HepG2 (cell line): ENCODE measurements at regions of chr18 and their contacts with region 1.

Region 1: GRCh38 chr18:57881818-57882413 is 78.8 kb upstream of the ATP8B1 start:
- DNase-seq: peak; percentile 75
- ATAC-seq: peak; percentile 98
- H3K4me3 ChIP-seq: peak overlapping the region; percentile 48 to 67 (median 51); a peak in 5 of 6 replicates
- H3K27ac ChIP-seq: no peak overlapping the region
- H3K4me1 ChIP-seq: peaks cover 22% of the 10 kb centered on the region
- H3K27me3 ChIP-seq: 0 out of 5 replicates have a peak, but pooled peaks cover 0 to 4% of the 10 kb centered on the region in 2 experiments
- CTCF ChIP-seq: peak; percentile 98
- EP300 ChIP-seq: no peak
- POLR2A ChIP-seq: no peak
- RAD21 ChIP-seq: peak; percentile 92

Region 2: GRCh38 chr18:57984490-57985115 is 102.7 kb after region 1 on chr18:
- CTCF ChIA-PET with region 1: no interaction called
- POLR2A ChIA-PET with region 1: no interaction called
- in situ Hi-C with region 1: no loop called
- intact Hi-C with region 1: no loop called
- DNase-seq: no peak
- ATAC-seq: no peak
- H3K4me3 ChIP-seq: no peak overlapping the region
- H3K27ac ChIP-seq: no peak overlapping the region
- H3K4me1 ChIP-seq: peaks cover 40% of the 10 kb centered on the region
- H3K27me3 ChIP-seq: no peaks in the 10 kb centered on the region
- CTCF ChIP-seq: no peak
- EP300 ChIP-seq: no peak
- POLR2A ChIP-seq: no peak
- RAD21 ChIP-seq: no peak

Region 3: DNA sequence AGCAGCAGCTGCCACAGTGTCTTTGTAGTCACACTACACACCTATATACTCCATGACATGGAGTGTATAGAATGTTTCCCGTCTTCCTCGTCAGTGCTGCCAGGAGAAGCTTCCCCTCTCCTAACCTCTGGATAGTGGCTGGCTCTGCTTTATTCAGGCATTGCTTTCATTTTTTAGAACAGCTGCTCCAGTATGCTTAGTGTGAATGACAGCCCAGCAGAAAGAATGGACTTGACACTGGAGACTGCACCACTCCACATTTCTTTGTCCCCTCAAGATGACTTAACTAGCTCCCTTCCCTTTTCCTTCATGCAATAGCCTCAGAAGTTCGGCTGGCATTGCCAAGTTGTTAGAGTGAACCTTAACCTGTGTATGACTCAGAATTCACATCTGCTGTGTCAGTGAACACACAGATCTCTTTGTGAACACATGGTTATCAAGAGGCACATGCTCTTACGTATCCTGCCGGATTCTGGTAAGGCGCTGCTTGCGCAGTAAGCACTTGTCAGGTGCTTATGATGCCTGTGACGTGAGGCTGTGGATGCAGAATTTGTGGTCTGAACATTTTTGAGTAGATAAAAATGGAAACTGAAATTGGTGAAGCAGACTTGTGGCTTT is 236.0 kb after region 1 on chr18:
- CTCF ChIA-PET with region 1: interaction called, 9 read pairs
- POLR2A ChIA-PET with region 1: no interaction called
- in situ Hi-C with region 1: loop called (anchors 25 kb)
- intact Hi-C with region 1: no loop called
- DNase-seq: peak; percentile 69
- ATAC-seq: peak; percentile 71
- H3K4me3 ChIP-seq: no peak overlapping the region; a peak in 1 of 6 replicates
- H3K27ac ChIP-seq: peak overlapping the region; percentile 26
- H3K4me1 ChIP-seq: peaks cover 27% of the 10 kb centered on the region
- H3K27me3 ChIP-seq: no peaks in the 10 kb centered on the region
- CTCF ChIP-seq: no peak
- EP300 ChIP-seq: no peak
- POLR2A ChIP-seq: no peak
- RAD21 ChIP-seq: no peak

Region 4: GRCh38 chr18:58180738-58181353 is 298.9 kb after region 1 on chr18:
- CTCF ChIA-PET with region 1: interaction called, 4 read pairs
- POLR2A ChIA-PET with region 1: no interaction called
- in situ Hi-C with region 1: no loop called
- intact Hi-C with region 1: loop called (anchors 1 kb)
- DNase-seq: peak; percentile 37
- ATAC-seq: no peak; the same call in 2 of the 3 replicates
- H3K4me3 ChIP-seq: no peak overlapping the region
- H3K27ac ChIP-seq: no peak overlapping the region
- H3K4me1 ChIP-seq: peaks cover 25% of the 10 kb centered on the region
- H3K27me3 ChIP-seq: no peaks in the 10 kb centered on the region
- CTCF ChIP-seq: peak; percentile 68
- EP300 ChIP-seq: no peak
- POLR2A ChIP-seq: no peak
- RAD21 ChIP-seq: no peak

Region 5: GRCh38 chr18:58402247-58402646 is 520.3 kb after region 1 on chr18:
- CTCF ChIA-PET with region 1: no interaction called
- POLR2A ChIA-PET with region 1: no interaction called
- in situ Hi-C with region 1: no loop called
- intact Hi-C with region 1: loop called (anchors 2 kb)
- DNase-seq: peak; percentile 58
- ATAC-seq: no peak
- H3K4me3 ChIP-seq: no peak overlapping the region
- H3K27ac ChIP-seq: peak overlapping the region; percentile 98
- H3K4me1 ChIP-seq: peaks cover 100% of the 10 kb centered on the region
- H3K27me3 ChIP-seq: no peaks in the 10 kb centered on the region
- CTCF ChIP-seq: no peak
- EP300 ChIP-seq: no peak
- POLR2A ChIP-seq: no peak
- RAD21 ChIP-seq: no peak

Region 6: DNA sequence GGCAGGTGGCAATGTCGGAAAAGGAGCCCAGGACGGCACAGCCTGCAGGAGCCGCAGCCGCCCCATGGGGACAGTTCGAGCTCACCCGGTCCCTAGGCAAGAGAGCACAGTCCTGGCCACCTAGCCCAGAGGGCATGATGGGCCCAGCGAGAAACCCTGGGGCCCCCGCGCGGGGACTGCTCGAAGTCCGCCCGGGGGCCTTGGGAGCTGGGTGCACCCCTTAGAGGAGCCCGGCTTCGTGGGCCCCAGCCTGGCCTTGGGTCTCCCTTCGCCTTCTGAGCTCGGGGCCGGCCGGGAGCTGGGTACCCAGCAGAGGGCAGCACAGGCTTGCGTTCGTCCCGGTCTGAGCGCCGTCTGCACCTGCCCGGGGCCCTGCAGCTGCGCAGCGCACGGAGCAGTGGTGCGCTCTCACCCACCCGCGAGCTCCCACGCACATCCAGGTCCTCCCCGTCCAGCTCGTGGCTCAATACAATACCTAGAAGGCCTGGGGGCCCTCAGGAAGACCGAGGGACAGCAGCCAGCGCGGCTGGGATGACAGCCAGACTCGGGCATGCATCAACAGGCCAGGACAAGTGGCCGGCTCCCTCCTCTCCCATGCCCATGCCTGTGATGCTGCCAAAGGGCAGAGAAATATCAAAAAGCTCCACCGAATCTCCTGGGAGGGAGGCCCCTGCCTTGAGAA is 886.5 kb after region 1 on chr18:
- CTCF ChIA-PET with region 1: interaction called, 3 read pairs
- POLR2A ChIA-PET with region 1: no interaction called
- in situ Hi-C with region 1: no loop called
- intact Hi-C with region 1: loop called (anchors 1 kb)
- DNase-seq: peak; percentile 35
- ATAC-seq: peak; percentile 98
- H3K4me3 ChIP-seq: peak overlapping the region; percentile 49 to 68 (median 49); a peak in 5 of 6 replicates
- H3K27ac ChIP-seq: no peak overlapping the region
- H3K4me1 ChIP-seq: peaks cover 52% of the 10 kb centered on the region
- H3K27me3 ChIP-seq: peaks cover 1 to 21% of the 10 kb centered on the region in 2 experiments; a peak in 2 of 5 replicates
- CTCF ChIP-seq: peak; percentile 97
- EP300 ChIP-seq: no peak
- POLR2A ChIP-seq: no peak
- RAD21 ChIP-seq: peak; percentile 86